Activated naive CD4-positive, alpha-beta T cell treated with anti-CD3 and anti-CD28 coated beads for 36 hours (primary cell): ENCODE measurements at regions of chr2 and their contacts with region 1.

Region 1: DNA sequence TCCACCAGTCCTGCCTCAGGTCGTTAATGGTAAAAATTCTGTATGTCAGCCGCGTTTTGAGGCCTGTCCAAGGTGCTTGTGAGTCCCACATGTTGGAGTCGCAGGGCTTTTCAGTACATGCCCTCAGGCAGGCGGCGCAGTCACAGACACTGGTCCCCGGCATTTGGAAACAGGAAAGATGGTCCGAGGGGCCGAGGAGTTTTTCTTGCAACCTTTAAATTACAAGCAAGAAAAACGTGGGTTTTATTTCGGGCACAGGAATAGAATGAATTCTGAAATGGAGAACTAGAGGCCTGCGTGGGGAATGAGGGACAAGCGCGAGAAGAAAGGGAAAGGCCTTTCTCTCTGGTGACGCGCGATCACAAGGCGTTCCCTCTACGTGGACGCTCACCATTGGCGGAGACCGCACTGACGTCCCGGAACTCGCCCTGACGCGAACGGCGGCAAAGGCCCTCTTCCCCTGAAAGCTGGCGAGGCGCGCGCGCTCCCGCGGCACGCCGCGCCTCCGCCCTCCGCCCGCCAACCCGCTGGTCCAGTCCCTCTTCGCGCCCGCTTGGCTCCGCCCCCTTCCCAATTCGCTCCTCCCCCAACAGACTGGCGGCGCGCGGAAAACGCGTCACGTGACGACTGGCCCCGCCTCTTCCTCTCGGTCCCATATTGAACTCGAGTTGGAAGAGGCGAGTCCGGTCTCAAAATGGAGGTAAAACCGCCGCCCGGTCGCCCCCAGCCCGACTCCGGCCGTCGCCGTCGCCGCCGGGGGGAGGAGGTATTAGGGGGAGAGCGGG is at the start of gene HNRNPA3:
- DNase-seq: peak; percentile 99
- H3K4me3 Mint-ChIP-seq: peak within 1 kb of the TSS; percentile 97
- H3K27ac Mint-ChIP-seq: peak within 1 kb of the TSS; percentile 100
- H3K4me1 Mint-ChIP-seq: peaks cover 43% of the 10 kb centered on the region
- H3K27me3 Mint-ChIP-seq: no peaks in the 10 kb centered on the region
- total RNA-seq, gene HNRNPA3: 312 to 340 TPM

Region 2: GRCh38 chr2:177229448-177230242 is 17.3 kb after region 1 on chr2:
- CTCF ChIA-PET with region 1: interaction called, 8 read pairs
- intact Hi-C with region 1: loop called (anchors 1 kb)
- DNase-seq: no peak
- H3K4me3 Mint-ChIP-seq: no peak overlapping the region
- H3K27ac Mint-ChIP-seq: peak overlapping the region; percentile 80
- H3K4me1 Mint-ChIP-seq: peaks cover 41% of the 10 kb centered on the region
- H3K27me3 Mint-ChIP-seq: no peaks in the 10 kb centered on the region

Region 3: GRCh38 chr2:177392373-177393202 is 180.3 kb after region 1 on chr2 and contains the start of gene AGPS:
- CTCF ChIA-PET with region 1: no interaction called
- intact Hi-C with region 1: loop called (anchors 2 kb)
- DNase-seq: peak; percentile 85
- H3K4me3 Mint-ChIP-seq: peak within 1 kb of the TSS; percentile 93
- H3K27ac Mint-ChIP-seq: peak within 1 kb of the TSS; percentile 62
- H3K4me1 Mint-ChIP-seq: peaks cover 59% of the 10 kb centered on the region
- H3K27me3 Mint-ChIP-seq: no peaks in the 10 kb centered on the region
- total RNA-seq, gene AGPS: 50.7 to 51.8 TPM

Region 4: DNA sequence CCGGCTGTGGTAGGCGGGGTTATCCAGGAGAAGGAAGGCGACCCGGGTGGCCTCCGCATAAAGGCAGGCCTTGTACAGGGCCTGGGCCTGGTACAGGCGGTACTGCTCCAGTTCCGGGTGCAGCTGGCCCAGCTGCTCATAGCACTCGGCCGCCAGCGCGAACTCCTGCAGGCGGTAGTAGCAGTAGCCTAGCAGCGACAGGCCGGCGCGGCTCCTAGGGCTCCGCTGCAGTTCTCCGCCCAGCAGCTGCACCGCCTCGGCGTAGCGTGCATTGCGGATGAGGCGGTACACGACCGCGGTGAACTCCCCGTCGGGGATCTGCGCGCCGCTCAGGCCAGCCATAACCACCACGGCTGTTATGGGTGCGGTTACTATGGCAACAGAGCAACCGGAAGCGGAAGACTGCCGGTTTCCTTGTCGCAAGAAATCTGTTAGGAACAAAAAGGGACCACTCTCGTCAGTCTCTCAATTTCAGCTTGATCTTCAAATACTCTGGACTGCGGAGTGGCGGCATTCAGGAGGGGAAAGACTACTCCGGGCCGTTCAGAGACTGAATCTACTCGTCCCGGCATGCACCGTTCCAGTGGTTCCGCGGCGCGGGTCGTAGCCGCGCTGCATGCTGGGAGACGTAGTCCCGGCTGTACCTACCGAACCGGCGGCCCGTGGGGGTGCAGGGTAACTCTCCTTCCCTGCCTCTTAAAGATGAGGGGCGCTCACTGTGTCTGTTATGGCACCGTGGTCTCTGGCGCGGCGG is 340.3 kb after region 1 on chr2:
- CTCF ChIA-PET with region 1: no interaction called
- intact Hi-C with region 1: loop called (anchors 1 kb)
- DNase-seq: peak; percentile 93
- H3K4me3 Mint-ChIP-seq: peak overlapping the region; percentile 88
- H3K27ac Mint-ChIP-seq: peak overlapping the region; percentile 99
- H3K4me1 Mint-ChIP-seq: peaks cover 8% of the 10 kb centered on the region
- H3K27me3 Mint-ChIP-seq: no peaks in the 10 kb centered on the region